B cell (primary cell): ENCODE measurements at regions of chr18 and their contacts with region 1.

Region 1: GRCh38 chr18:14086458-14087231 is 45.6 kb downstream of the ZNF519 start:
- DNase-seq: peak; percentile 18
- ATAC-seq: no peak
- H3K4me3 ChIP-seq: no peak overlapping the region
- H3K4me3 Mint-ChIP-seq: no peak overlapping the region
- H3K27ac ChIP-seq: no peak overlapping the region
- H3K27ac Mint-ChIP-seq: no peak overlapping the region
- H3K4me1 ChIP-seq: no peaks in the 10 kb centered on the region
- H3K4me1 Mint-ChIP-seq: no peaks in the 10 kb centered on the region
- H3K27me3 ChIP-seq: no peaks in the 10 kb centered on the region
- H3K27me3 Mint-ChIP-seq: no peaks in the 10 kb centered on the region
- CTCF ChIP-seq: peak; percentile 63

Region 2: GRCh38 chr18:13425462-13426133 is 661.0 kb before region 1 on chr18:
- CTCF ChIA-PET with region 1: no interaction called
- POLR2A ChIA-PET with region 1: no interaction called
- intact Hi-C with region 1: no loop called
- DNase-seq: no peak
- ATAC-seq: no peak
- H3K4me3 ChIP-seq: no peak overlapping the region
- H3K4me3 Mint-ChIP-seq: no peak overlapping the region
- H3K27ac ChIP-seq: no peak overlapping the region
- H3K27ac Mint-ChIP-seq: no peak overlapping the region
- H3K4me1 ChIP-seq: peaks cover 0 to 6% of the 10 kb centered on the region in 2 donors
- H3K4me1 Mint-ChIP-seq: no peaks in the 10 kb centered on the region
- H3K27me3 ChIP-seq: no peaks in the 10 kb centered on the region
- H3K27me3 Mint-ChIP-seq: peaks cover 10% of the 10 kb centered on the region
- CTCF ChIP-seq: no peak

Region 3: DNA sequence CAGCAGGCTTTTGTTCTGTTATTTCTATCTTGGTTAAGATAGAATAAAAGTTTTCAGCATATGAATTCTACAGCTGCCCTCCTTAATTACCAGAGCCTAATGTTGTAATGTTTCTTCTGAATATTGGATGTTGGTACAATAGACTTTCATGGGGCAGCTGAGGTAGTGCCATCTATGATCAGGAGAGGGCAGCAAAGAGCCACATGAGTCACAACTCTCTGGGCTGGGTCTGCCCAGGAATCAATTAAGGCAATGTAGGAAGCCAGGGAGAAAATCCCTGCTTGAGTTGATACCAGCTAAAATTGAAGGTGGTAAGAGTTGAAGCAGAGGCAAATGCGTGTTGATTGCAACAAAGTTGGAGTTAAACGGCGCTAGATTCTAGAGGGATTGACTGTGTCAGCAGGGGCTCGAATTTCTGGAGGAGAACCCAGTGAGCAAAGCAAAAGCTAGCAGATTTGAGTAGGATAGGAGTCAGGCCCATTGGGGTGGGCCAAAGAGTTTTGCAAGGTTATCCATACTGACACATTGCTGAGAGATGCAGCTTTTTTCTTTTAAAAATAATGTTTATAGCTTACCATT is 273.3 kb before region 1 on chr18:
- CTCF ChIA-PET with region 1: interaction called, 20 read pairs
- POLR2A ChIA-PET with region 1: no interaction called
- intact Hi-C with region 1: loop called (anchors 2 kb)
- DNase-seq: peak; percentile 56
- ATAC-seq: peak; percentile 64
- H3K4me3 ChIP-seq: no peak overlapping the region
- H3K4me3 Mint-ChIP-seq: no peak overlapping the region
- H3K27ac ChIP-seq: no peak overlapping the region
- H3K27ac Mint-ChIP-seq: no peak overlapping the region
- H3K4me1 ChIP-seq: no peaks in the 10 kb centered on the region
- H3K4me1 Mint-ChIP-seq: no peaks in the 10 kb centered on the region
- H3K27me3 ChIP-seq: peaks cover 0 to 3% (median 0%) of the 10 kb centered on the region in 4 experiments
- H3K27me3 Mint-ChIP-seq: peaks cover 4% of the 10 kb centered on the region
- CTCF ChIP-seq: peak; percentile 93

Region 4: DNA sequence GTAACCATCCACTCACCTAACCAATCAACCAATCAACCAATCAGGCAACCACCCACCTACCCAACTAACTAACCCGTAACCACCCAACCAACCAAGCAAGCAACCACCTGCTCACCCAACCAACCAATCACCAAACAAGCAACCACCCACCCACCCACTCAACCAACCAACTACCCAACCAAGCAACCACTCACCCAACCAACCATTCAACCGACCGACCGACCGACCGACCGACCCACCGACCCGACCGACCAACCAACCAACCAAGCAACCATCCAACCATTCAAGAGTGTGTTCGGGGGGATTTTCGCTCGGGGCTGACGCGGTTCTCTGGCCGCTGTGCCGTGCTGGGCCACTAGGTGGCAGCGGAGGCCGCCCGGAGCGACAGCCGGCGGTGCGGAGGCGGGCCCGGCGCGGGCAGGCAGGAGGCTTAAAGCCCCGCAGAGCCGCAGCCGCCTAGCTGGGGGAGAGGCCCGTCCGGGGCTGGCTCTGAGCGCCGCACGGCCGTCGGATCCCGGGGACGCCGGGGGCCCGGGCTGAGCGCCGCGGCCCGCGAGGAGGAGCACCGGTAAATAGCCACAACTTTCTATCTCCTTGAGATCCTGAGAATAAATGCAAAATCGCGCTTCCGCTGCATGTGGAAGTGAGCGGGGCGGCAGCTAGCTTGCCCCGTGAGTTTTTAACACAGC is 262.8 kb before region 1 on chr18 and contains the start of gene MC5R:
- CTCF ChIA-PET with region 1: interaction called, 12 read pairs
- POLR2A ChIA-PET with region 1: no interaction called
- intact Hi-C with region 1: no loop called
- DNase-seq: peak; percentile 79
- ATAC-seq: peak; percentile 91
- H3K4me3 ChIP-seq: peak within 1 kb of the TSS in 3 of 5 experiments; percentile 18 to 50 (median 31)
- H3K4me3 Mint-ChIP-seq: peak within 1 kb of the TSS; percentile 71
- H3K27ac ChIP-seq: no peak within 1 kb of the TSS
- H3K27ac Mint-ChIP-seq: no peak within 1 kb of the TSS
- H3K4me1 ChIP-seq: peaks cover 3 to 6% of the 10 kb centered on the region in 2 donors
- H3K4me1 Mint-ChIP-seq: peaks cover 8% of the 10 kb centered on the region
- H3K27me3 ChIP-seq: peaks cover 0 to 23% (median 6%) of the 10 kb centered on the region in 4 experiments
- H3K27me3 Mint-ChIP-seq: peaks cover 38% of the 10 kb centered on the region
- CTCF ChIP-seq: peak; percentile 68
- total RNA-seq, gene MC5R: not detected in 2 replicates

Region 5: DNA sequence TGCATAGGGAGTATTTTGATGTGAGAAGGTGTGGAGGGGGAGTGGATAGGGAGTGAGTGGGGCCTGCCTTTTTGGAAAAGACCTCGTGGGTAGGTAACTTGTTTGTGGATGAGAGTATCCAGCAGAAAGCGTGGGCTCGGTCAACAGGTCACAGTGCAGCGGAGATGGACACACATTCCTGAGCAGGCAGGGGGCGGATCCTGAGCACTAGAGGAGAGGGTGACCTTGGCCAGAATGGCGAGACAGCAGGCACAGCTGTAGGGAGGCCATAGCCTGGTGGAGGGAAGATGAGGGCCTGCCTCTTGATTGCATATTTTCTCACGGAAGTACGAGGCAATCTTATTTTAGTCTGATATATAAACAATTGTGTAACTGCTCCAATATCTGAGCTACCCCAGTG is 167.7 kb before region 1 on chr18:
- CTCF ChIA-PET with region 1: no interaction called
- POLR2A ChIA-PET with region 1: no interaction called
- intact Hi-C with region 1: no loop called
- DNase-seq: no peak
- ATAC-seq: no peak
- H3K4me3 ChIP-seq: no peak overlapping the region
- H3K4me3 Mint-ChIP-seq: no peak overlapping the region
- H3K27ac ChIP-seq: no peak overlapping the region
- H3K27ac Mint-ChIP-seq: no peak overlapping the region
- H3K4me1 ChIP-seq: no peaks in the 10 kb centered on the region
- H3K4me1 Mint-ChIP-seq: no peaks in the 10 kb centered on the region
- H3K27me3 ChIP-seq: no peaks in the 10 kb centered on the region
- H3K27me3 Mint-ChIP-seq: no peaks in the 10 kb centered on the region
- CTCF ChIP-seq: no peak

Region 6: DNA sequence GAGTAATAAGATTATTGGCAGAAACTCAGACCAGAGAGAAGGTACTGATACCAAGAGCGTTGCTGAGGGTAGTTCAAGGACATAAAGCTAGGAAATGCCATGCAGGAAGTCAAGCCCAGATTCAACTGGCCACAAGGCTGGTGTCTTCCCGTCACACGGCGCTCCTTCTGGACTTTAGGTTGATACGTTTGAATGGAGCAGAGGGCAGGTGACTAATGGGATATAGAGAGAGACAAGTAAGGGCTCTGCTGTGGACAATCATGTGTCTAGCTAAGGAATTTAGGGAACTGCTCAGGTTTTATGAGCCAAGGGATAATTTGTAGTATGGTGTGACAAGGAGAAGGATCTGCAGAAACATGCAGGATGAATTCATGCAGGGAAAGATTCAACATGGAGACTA is 87.4 kb before region 1 on chr18:
- CTCF ChIA-PET with region 1: no interaction called
- POLR2A ChIA-PET with region 1: no interaction called
- intact Hi-C with region 1: no loop called
- DNase-seq: no peak
- ATAC-seq: no peak
- H3K4me3 ChIP-seq: no peak overlapping the region
- H3K4me3 Mint-ChIP-seq: no peak overlapping the region
- H3K27ac ChIP-seq: no peak overlapping the region
- H3K27ac Mint-ChIP-seq: no peak overlapping the region
- H3K4me1 ChIP-seq: no peaks in the 10 kb centered on the region
- H3K4me1 Mint-ChIP-seq: no peaks in the 10 kb centered on the region
- H3K27me3 ChIP-seq: no peaks in the 10 kb centered on the region
- H3K27me3 Mint-ChIP-seq: no peaks in the 10 kb centered on the region
- CTCF ChIP-seq: no peak